ENCODE measurements at regions of chr5 and their contacts with region 1.

Region 1: GRCh38 chr5:93596676-93597461 is 13.8 kb downstream of the NR2F1 start:
- DNase-seq: no peak
- H3K4me3 ChIP-seq: no peak overlapping the region
- H3K27ac ChIP-seq: peak overlapping the region in 2 of 5 donors; percentile 56 to 76
- H3K4me1 ChIP-seq: no peaks in the 10 kb centered on the region
- H3K27me3 ChIP-seq: no peaks in the 10 kb centered on the region
- CTCF ChIP-seq: no peak
- POLR2A ChIP-seq: no peak

Region 2: DNA sequence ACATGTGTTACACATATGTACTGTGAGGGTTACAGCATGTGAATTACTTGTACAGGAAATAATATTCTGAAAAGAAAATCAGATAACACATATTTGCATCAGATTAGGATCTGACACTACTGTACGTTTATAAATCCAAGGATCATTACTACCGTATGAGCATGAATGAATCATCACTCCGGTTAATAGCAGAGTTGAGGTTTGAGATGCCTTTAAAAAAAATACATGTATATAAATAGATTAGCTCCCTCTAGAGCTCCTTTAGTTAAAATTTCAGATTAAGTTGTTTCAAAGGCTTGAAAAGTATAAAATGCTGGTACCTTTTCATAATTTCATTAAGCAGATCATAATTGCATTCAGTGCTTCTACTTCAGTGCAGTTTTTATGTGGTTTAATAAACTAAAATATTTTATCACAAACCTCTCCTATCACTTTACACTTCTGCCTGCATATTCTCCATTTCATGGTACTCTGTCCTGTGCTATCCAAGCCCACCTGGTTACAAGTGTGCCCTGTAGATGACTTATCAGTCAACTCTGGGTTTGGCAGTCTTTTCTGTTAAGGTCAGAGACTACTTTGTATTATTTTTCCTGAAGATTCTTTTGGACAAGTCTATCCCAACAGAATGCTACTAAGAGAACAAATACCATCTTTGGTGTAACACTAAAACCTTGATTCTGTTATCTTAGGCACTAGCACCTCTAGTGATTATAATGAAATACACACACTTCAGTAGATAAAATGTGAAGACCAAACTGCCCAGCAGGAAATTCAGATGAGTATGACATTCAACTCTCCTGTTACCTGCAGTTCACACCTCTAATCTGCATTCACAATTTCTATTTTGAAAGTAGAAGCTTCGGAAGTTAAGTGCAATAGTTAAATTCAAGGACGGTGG is 192.6 kb after region 1 on chr5:
- intact Hi-C with region 1: loop called in 1 of 2 experiments (anchors 10 kb)
- DNase-seq: no peak
- H3K4me3 ChIP-seq: no peak overlapping the region
- H3K27ac ChIP-seq: no peak overlapping the region
- H3K4me1 ChIP-seq: no peaks in the 10 kb centered on the region
- H3K27me3 ChIP-seq: no peaks in the 10 kb centered on the region
- CTCF ChIP-seq: no peak
- POLR2A ChIP-seq: no peak

Region 3: GRCh38 chr5:93915142-93915553 is 318.3 kb after region 1 on chr5:
- intact Hi-C with region 1: loop called in 1 of 2 experiments (anchors 10 kb)
- DNase-seq: no peak
- H3K4me3 ChIP-seq: no peak overlapping the region
- H3K27ac ChIP-seq: no peak overlapping the region
- H3K4me1 ChIP-seq: no peaks in the 10 kb centered on the region
- H3K27me3 ChIP-seq: no peaks in the 10 kb centered on the region
- CTCF ChIP-seq: peak; percentile 45 to 70 (median 57)
- POLR2A ChIP-seq: no peak

Measured in adrenal gland (tissue), 19 donors.